Activated CD4-positive, alpha-beta T cell treated with anti-CD3 and anti-CD28 coated beads, Interleukin-2, amount 10 ng/mL, durations not matched to agents 24 days and 14 days (primary cell): ENCODE measurements at regions of chr3 and their contacts with region 1.

Region 1: DNA sequence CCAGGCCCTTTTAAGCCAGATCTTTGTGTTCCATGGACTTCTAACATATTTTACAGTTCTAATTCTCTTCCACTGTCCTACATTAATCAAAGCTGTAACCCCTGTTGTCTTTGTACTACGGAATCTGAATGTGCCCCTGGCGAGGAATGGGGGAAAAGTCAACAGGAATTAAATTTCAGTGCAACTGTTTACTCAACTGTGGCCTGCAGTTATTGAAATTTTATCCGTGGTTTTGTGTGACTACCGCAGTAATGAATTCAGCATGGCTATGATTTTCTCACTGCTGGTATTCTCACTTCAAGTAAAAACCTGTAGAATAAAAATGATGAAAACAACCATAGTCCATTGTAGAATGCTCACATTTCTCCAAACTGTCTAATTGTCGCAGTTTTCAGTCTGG is 388.0 kb downstream of the FOXP1 start:
- DNase-seq: no peak
- H3K4me3 Mint-ChIP-seq: no peak overlapping the region
- H3K27ac Mint-ChIP-seq: no peak overlapping the region
- H3K4me1 Mint-ChIP-seq: peaks cover 25% of the 10 kb centered on the region
- H3K27me3 Mint-ChIP-seq: no peaks in the 10 kb centered on the region

Region 2: GRCh38 chr3:71064288-71064955 is 131.1 kb before region 1 on chr3:
- intact Hi-C with region 1: loop called (anchors 5 kb)
- DNase-seq: peak; percentile 92
- H3K4me3 Mint-ChIP-seq: no peak overlapping the region
- H3K27ac Mint-ChIP-seq: no peak overlapping the region
- H3K4me1 Mint-ChIP-seq: peaks cover 55% of the 10 kb centered on the region
- H3K27me3 Mint-ChIP-seq: no peaks in the 10 kb centered on the region

Region 3: DNA sequence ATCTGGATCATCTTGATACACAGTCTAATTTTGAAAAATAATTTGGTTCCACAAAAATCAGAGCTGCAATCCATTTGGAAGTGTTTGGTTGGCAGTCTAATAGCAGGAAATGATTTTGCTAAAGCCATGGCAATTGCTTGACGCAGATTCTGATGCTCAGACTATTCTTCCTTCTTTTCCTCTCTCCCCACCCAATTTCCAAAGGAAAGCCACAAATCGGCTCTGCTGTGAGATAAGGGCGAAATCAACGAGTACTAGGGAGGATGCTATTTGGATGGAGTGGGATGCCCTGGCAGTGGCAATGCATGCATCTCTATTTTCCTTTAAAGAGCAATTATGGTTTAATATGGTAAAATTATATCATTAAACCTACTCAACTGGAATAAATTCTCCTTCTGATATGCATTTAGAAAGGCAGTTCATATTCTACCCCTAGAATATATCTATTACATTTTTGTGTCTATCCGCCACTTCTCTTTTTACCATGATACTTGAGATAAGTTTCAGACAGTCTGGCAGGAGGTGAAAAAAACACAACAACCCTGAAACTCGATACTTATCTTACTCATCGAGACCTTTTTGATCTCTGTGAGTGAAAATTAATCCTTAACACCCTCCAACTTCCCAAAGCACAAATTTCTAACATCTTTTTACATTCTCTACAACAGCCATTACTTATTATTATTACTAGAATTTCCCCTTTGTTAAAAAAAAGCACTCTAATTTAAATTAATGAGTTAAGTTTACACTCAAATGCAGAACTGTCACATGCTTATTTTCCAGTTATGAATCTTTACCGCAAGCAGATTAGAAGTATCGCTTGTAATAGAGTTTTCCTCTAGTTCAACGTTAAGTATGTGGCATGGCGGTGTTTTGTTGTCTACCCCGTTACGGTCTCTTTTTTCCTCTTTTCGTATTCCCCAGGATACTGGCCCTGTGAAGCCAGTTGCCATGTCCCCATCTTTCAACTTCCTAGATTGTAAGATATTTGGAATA is 45.2 kb before region 1 on chr3:
- intact Hi-C with region 1: loop called (anchors 5 kb)
- DNase-seq: no peak
- H3K4me3 Mint-ChIP-seq: no peak overlapping the region
- H3K27ac Mint-ChIP-seq: peak overlapping the region; percentile 18
- H3K4me1 Mint-ChIP-seq: peaks cover 10% of the 10 kb centered on the region
- H3K27me3 Mint-ChIP-seq: no peaks in the 10 kb centered on the region

Region 4: GRCh38 chr3:71702131-71703024 is 506.9 kb after region 1 on chr3:
- intact Hi-C with region 1: no loop called
- DNase-seq: peak; percentile 84
- H3K4me3 Mint-ChIP-seq: peak overlapping the region; percentile 75
- H3K27ac Mint-ChIP-seq: peak overlapping the region; percentile 87
- H3K4me1 Mint-ChIP-seq: peaks cover 55% of the 10 kb centered on the region
- H3K27me3 Mint-ChIP-seq: no peaks in the 10 kb centered on the region